ENCODE measurements at regions of chr11 and their contacts with region 1.

Region 1: DNA sequence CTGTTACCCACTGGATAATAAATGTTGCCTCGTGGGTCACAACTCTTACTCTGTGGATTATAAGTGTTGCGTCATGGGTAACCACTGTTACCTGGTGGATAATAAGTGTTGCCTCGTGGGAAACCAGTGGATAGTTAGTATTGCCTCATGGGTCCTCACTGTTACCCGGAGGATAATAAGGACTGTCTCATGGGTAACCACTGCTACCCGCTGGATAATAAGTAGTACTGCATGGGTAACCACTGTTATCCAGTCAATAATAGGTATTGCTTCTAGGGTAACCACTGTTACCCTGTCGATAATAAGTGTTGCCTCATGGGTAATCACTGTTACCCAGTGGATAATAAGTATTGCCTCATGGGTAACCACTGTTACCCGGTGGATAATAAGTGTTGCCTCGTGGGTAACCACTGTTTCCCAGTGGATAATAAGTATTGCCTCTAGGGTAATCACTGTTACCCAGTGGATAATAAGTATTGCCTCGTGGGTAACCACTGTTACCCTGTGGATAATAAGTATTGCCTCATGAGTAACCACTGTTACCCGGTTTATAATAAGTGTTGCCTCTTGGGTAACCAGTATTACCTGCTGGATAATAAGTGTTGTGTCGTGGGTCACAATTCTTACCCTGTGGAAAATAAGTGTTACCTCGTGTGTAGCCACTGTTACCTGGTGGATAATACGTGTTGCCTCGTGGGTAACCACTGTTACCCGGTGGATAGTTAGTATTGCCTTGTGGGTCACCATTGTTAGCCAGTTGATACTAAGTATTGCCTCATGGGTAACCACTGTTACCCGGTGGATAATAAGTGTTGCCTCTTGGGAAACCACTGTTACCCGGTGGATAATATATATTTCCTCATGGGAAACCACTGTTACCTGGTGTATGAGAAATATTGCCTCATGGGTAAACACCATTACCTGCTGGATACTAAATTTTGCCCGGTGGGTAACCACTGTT is 15.7 kb upstream of the NXPE4 start:
- DNase-seq: no peak
- ATAC-seq: peak; percentile 11

Region 2: GRCh38 chr11:114354076-114354475 is 257.2 kb before region 1 on chr11:
- intact Hi-C with region 1: loop called in 1 of 2 experiments (anchors 5 kb)
- DNase-seq: no peak
- ATAC-seq: no peak

Region 3: DNA sequence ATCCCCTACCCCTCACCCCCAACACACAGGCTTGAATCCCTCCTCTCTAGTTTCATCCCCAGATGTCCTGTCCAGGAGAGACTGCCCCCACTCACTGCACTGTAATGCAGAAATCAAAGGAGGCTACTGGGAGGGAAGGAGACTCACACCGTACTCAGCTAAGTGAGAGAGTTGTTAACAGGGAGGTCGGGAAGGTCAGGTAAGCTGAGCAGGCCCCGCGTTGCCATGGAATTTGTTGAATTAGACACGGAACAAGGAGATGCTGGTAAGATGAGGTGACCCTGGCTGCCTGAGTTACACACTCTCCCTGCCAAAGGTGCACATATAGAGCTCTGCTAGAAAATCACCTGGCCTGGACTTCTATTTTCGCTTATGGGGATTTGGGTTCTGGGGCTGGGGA is 265.0 kb after region 1 on chr11:
- intact Hi-C with region 1: no loop called
- DNase-seq: no peak
- ATAC-seq: no peak

Region 4: DNA sequence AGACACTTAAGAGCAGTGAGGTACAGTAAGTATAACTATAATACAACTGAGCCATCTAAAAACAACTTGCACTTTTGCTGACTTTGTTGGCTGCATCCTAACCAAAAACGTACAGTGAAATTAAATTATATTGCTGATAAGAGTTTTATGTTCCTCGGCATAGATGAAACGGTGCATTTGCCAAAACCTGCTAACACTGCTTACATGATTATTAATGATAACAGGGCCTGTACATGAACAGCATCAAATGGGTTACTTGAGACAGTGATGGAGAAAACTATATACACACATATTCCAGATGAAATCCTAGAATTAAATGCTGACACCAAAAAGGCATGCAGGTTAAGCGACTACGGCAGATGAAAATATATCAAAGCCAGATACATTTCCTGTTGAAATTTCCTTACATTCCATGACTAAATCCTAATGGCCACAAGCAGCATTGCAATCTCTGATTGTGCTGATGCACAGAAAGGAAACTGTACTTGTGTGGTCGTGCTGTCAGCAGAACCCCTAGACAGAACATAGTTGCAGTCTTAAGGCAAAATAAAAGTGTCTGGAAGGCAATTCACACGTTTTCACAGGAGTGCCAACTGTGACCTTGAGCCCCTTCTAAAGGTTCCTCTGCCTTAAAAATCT is 749.0 kb after region 1 on chr11:
- intact Hi-C with region 1: no loop called
- DNase-seq: no peak
- ATAC-seq: no peak

Measured in left colon (tissue), 2 donors.